Calu3 (cell line): ENCODE measurements at regions of chr19 and their contacts with region 1.

Region 1: GRCh38 chr19:48780631-48781391 is 25.5 kb downstream of the FGF21 start:
- DNase-seq: peak; percentile 70
- H3K4me3 Mint-ChIP-seq: no peak overlapping the region
- H3K27ac Mint-ChIP-seq: peak overlapping the region; percentile 64
- H3K4me1 Mint-ChIP-seq: peaks cover 18% of the 10 kb centered on the region
- H3K27me3 Mint-ChIP-seq: no peaks in the 10 kb centered on the region
- CTCF ChIP-seq: no peak

Region 2: DNA sequence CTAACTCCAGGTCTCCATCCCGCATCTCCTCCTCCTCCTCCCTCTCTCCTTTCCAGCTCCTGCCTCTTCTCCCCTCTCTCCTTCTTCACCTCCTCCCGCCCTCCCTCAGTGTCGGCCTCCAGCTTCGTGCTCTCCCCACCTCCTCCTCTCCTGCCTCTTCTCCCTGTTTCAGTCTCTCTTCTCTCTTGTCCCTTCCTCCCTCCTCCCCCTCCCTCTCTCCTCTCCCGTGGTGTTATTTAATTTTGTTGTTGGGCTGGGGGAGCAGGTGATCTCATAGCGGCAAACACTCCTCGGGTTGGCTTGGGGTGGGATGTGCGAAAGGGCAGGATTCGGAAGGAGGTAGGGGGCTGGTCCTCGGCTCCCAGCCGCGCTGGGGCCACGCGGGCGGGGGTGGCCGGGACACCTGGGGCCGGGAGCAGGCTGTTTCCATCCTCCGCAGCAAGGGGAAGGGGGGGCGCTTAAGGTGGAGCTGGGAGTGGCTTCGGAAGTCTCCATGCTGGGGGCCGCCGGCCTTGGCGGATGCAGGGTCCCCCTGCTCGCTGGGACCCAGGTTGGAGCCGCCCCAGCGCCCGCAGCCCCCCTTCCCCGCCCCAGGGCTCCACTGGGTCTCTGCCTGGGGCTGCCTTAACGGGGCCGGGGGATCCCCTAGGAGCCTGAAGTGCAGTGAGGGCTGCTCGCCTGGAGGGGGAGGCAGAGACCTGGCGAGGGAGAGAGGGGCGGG is 134.7 kb before region 1 on chr19 and contains the start of gene CA11:
- CTCF ChIA-PET with region 1: interaction called, 11 read pairs
- intact Hi-C with region 1: loop called (anchors 2 kb)
- DNase-seq: peak; percentile 94
- H3K4me3 Mint-ChIP-seq: peak within 1 kb of the TSS; percentile 55
- H3K27ac Mint-ChIP-seq: no peak within 1 kb of the TSS
- H3K4me1 Mint-ChIP-seq: peaks cover 19% of the 10 kb centered on the region
- H3K27me3 Mint-ChIP-seq: peaks cover 59% of the 10 kb centered on the region
- CTCF ChIP-seq: peak; percentile 91
- total RNA-seq, gene CA11: 2.1 and 5.1 TPM in 2 replicates

Region 3: DNA sequence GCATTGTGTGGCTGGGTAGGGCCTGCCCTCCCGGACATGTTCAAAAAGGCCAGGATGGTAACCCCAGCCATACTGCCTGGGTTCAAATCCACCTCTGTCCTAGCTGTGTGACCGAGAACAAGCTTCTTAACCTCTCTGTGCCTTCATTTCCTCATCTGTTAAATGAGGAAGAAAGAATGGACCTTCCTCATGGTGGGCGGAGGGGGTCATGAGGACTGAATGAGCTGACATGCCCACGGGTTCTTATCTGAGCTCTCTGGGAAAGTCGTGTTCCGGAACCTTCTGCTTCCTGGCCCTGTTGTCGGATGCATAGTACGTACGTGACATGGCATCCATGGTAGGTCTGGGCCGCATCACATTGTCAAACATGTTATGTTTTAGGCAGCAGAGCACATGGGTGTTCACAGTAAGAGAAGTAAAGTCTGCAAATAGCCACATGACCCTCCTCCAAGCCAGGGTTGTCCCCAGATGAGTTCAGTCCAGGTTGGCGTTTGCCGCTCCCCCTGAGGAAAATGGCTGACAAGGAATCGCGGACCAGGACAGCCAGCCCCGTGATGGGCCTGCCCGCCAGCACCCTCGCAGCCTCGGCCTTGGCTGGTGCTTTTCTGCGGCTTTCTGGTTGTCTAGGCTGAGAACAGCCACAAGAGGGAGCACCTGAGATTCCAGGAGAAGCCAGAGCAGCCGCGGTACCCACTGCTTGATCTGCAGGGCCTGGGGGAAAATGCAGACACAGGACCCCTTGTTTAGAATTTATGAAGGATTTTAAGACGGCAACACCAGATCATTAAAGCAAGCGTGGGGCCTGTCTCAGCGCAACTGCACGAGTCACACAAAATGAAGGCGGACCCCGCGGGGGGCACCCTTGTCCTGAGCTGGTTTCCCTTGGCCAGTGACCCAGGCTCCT is 105.6 kb before region 1 on chr19:
- CTCF ChIA-PET with region 1: interaction called, 10 read pairs
- intact Hi-C with region 1: no loop called
- DNase-seq: peak; percentile 87
- H3K4me3 Mint-ChIP-seq: no peak overlapping the region
- H3K27ac Mint-ChIP-seq: no peak overlapping the region
- H3K4me1 Mint-ChIP-seq: peaks cover 25% of the 10 kb centered on the region
- H3K27me3 Mint-ChIP-seq: no peaks in the 10 kb centered on the region
- CTCF ChIP-seq: peak; percentile 85